GM18951 (cell line): ENCODE measurements at regions of chr2 and their contacts with region 1.

Region 1: DNA sequence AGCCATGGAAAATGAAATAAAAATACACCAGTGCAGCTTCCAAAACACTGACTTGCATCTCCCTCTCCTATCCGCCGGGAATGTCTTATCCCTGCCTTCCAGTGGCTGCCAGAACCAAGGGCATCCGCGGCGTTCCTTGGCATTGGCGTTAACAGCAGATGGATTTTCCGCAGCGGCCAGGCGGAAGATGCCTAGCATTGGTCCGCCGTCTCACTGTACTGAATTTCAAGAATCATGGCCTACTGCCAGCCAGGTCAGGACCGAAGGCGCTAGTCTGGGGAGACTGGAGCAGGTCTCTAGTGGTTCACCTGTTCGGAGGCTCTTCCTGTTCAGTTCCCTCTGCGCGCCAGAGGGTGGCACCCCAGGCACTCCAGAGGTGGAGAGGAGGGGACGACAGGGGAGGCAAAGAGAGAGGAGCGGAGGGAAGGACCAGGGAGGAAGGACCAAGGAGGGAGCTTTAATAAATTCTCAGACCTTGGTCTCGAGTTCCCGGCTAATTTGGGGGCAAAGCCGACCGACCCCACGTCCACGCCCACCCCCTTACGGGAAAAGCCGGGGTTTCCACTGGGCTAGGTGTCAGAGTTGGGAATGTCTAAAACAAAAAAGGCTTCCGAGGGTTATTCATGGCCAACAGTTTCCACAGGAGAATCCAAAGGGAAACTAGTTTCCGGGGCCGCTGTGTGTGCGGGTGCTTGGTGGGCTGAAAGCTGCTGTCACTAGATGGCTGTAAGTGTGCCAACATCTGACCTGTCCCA is 3.7 kb upstream of the BCL2L11 start:
- POLR2A ChIP-seq: no peak

Region 2: GRCh38 chr2:110818767-110819481 is 298.1 kb before region 1 on chr2:
- in situ Hi-C with region 1: loop called (anchors 10 kb)
- POLR2A ChIP-seq: no peak

Region 3: DNA sequence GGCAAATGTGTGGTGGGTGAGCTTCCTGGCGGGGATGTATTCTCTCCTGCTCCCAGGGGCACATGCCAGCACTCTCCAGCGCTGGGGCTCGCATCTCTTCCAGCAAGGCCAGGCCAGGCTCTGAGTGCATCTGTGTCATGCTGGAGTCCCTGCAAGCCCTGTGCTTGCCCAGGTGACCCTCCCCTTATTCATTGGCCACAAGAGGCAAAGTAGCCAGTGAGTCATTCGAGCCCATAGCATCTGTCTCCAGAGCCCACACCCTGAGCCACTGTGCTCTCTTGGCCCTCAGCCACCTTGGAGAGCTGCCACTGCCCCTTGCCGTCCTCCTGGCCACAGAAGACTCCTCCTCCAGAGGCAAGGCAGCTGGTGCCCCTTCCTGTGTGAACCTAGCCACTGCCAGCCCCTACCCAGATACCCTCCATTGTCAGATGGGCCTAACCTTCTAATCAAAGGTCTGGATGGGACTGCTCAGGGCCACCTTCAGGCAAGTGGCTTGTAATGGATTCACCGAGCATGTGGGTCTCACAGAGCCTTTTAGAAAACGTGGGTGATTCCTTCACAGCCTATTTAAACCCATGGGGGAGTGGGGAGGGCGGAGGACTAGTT is 247.4 kb before region 1 on chr2:
- in situ Hi-C with region 1: no loop called
- POLR2A ChIP-seq: no peak